HepG2 (cell line): ENCODE measurements at regions of chr1 and their contacts with region 1.

Region 1: GRCh38 chr1:25895365-25895993 is 10.7 kb downstream of the STMN1 start:
- DNase-seq: peak; percentile 75
- ATAC-seq: peak; percentile 92
- H3K4me3 ChIP-seq: no peak overlapping the region
- H3K27ac ChIP-seq: no peak overlapping the region
- H3K4me1 ChIP-seq: peaks cover 28% of the 10 kb centered on the region
- H3K27me3 ChIP-seq: no peaks in the 10 kb centered on the region
- CTCF ChIP-seq: peak; percentile 96
- EP300 ChIP-seq: no peak
- POLR2A ChIP-seq: no peak
- RAD21 ChIP-seq: peak; percentile 98

Region 2: GRCh38 chr1:25837262-25837875 is 58.1 kb before region 1 on chr1:
- CTCF ChIA-PET with region 1: interaction called, 4 read pairs
- POLR2A ChIA-PET with region 1: no interaction called
- in situ Hi-C with region 1: no loop called
- intact Hi-C with region 1: loop called (anchors 1 kb)
- DNase-seq: peak; percentile 41
- ATAC-seq: peak; percentile 59; the same call in 1 of the 3 replicates
- H3K4me3 ChIP-seq: no peak overlapping the region
- H3K27ac ChIP-seq: no peak overlapping the region
- H3K4me1 ChIP-seq: peaks cover 7% of the 10 kb centered on the region; the same call in 1 of the 2 replicates
- H3K27me3 ChIP-seq: no peaks in the 10 kb centered on the region
- CTCF ChIP-seq: peak; percentile 64
- EP300 ChIP-seq: no peak
- POLR2A ChIP-seq: no peak
- RAD21 ChIP-seq: no peak

Region 3: DNA sequence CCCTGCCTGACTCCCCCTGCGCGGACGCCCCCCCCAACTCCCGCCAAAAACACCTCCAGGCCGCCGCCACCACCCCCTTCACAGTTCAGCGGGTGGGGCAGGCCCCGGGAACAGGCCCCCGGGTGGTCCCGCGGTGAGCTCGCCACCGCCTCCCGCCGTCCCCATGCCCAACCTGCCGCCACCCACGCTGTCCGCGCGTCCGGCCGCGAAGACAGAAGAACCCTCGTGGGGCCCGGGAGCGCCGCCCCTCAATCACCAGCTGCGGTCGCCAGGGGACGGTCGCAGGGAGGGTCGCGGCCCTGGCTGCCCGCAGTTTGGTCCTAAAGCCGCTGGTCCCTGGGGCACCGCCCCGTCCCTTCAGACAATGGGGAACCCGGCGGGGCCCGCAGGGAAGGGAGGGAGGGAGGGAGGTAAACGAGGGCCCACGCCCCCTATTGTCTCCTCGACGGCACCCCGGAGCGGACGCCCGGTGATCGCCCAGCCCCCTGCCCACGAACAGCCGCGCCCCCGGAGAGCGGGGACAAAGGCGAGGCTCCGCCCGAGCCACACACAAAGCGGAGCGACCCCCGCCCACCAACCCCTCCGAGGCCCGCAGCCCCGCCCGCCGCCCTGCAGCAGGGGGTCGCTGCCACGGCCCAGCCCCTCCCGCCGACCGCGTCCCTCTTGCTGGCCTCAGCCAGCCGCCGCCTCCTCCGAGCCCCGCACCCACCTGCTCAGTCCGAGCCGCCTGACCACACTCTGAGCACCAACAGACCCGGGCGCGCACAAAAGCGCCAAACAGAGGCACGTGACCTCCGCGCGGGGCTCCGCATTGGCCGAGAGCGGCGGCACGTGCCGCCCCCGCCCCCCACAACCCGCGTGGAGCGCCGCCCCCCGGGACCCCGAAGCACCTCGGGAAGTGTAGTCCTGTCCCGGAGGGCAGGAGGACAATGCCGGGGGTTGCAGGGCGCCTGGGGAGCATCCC is 10.5 kb after region 1 on chr1 and contains the start of gene STMN1:
- CTCF ChIA-PET with region 1: no interaction called
- POLR2A ChIA-PET with region 1: interaction called, 4 read pairs
- in situ Hi-C with region 1: no loop called
- intact Hi-C with region 1: loop called (anchors 1 kb)
- DNase-seq: peak; percentile 86
- ATAC-seq: peak; percentile 89
- H3K4me3 ChIP-seq: peak within 1 kb of the TSS; percentile 74 to 92 (median 84)
- H3K27ac ChIP-seq: peak within 1 kb of the TSS; percentile 70
- H3K4me1 ChIP-seq: peaks cover 52% of the 10 kb centered on the region
- H3K27me3 ChIP-seq: peaks cover 0 to 3% of the 10 kb centered on the region in 2 experiments; a peak in 2 of 5 replicates
- CTCF ChIP-seq: no peak
- EP300 ChIP-seq: no peak
- POLR2A ChIP-seq: peak; percentile 89 to 98
- RAD21 ChIP-seq: no peak
- total RNA-seq, gene STMN1: 409 and 618 TPM in 2 replicates

Region 4: DNA sequence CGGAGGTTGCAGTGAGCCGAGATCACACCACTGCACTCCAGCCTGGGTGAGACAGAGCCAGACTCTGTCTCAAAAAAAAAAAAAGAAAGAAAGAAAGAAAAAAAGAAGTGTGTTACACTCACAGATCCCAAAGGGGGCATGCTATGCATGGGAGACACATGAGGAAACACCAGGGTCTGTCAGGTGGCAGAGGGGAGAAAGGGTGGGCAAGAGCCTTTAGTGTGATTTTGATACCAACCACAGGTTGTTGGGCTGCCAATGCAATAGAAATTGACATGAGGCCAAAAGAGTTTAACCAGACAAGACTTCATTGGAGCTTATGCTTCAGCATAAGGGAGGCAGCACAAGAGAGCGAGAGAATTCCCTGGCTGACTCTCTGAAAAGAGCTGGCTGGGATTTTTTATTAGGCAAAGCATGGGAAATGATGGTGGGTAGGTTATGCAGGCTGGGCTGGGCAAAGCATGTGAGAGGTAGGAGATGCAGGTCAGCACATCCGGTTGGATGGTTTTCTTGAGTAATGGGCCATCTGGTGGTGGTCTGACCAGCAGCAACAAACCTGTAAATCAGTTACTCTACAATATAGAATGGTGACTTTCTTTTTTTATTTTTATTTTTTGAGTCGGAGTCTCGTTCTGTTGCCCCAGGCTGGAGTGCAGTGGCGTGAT is 114.4 kb after region 1 on chr1:
- CTCF ChIA-PET with region 1: interaction called, 17 read pairs
- POLR2A ChIA-PET with region 1: no interaction called
- in situ Hi-C with region 1: no loop called
- intact Hi-C with region 1: no loop called
- DNase-seq: peak; percentile 52
- ATAC-seq: peak; percentile 79
- H3K4me3 ChIP-seq: no peak overlapping the region
- H3K27ac ChIP-seq: no peak overlapping the region
- H3K4me1 ChIP-seq: peaks cover 24% of the 10 kb centered on the region
- H3K27me3 ChIP-seq: peaks cover 3 to 11% of the 10 kb centered on the region in 2 experiments; a peak in 4 of 5 replicates
- CTCF ChIP-seq: peak; percentile 43
- EP300 ChIP-seq: no peak
- POLR2A ChIP-seq: no peak
- RAD21 ChIP-seq: no peak

Region 5: DNA sequence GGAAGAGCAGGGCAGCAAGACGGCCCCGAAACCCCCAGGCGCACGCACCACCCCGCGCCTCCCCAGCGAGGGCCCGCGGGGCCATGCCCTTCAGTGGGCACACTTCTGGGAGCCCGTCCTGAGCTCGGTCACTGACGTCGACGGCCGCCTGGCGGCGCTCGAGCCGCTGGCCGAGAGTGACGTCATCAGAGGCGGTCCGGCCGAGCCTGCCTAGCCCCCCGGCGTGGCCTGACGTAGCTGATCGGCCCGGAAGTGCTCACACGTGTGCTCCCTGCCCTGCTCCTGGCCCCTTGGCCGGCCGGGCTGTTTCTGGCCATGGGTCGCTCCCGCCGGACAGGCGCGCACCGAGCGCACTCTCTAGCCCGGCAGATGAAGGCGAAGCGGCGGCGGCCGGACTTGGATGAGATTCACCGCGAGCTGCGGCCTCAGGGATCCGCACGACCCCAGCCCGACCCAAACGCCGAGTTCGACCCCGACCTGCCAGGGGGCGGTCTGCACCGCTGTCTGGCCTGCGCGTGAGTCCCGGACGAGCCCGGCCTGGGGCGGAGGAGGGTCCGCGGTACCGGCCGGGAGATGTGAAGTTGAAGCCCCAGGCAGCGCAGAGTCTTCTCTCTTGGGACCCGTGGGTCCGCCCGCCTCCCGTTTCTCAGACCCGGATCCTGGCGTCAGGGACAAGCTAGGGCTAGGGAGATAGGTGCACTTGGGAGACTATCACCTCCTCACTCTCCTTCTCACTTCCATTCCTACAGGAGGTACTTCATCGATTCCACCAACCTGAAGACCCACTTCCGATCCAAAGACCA is 274.4 kb after region 1 on chr1 and contains the start of gene ZNF593:
- CTCF ChIA-PET with region 1: no interaction called
- POLR2A ChIA-PET with region 1: no interaction called
- in situ Hi-C with region 1: loop called (anchors 10 kb)
- intact Hi-C with region 1: no loop called
- DNase-seq: peak; percentile 80
- ATAC-seq: peak; percentile 93
- H3K4me3 ChIP-seq: peak within 1 kb of the TSS; percentile 83 to 91 (median 90)
- H3K27ac ChIP-seq: peak within 1 kb of the TSS; percentile 60
- H3K4me1 ChIP-seq: peaks cover 27% of the 10 kb centered on the region
- H3K27me3 ChIP-seq: peaks cover 0 to 9% of the 10 kb centered on the region in 2 experiments; a peak in 4 of 5 replicates
- CTCF ChIP-seq: peak; percentile 98
- EP300 ChIP-seq: no peak
- POLR2A ChIP-seq: peak in 1 of 2 experiments; percentile 80; a peak in 2 of 4 replicates
- RAD21 ChIP-seq: peak; percentile 74
- total RNA-seq, gene ZNF593: 55.8 and 59.3 TPM in 2 replicates